GM12878 (cell line): ENCODE measurements at regions of chr5 and their contacts with region 1.

Region 1: GRCh38 chr5:127793879-127794278 is 90.7 kb downstream of the CCDC192 start:
- DNase-seq: no peak
- ATAC-seq: no peak
- H3K4me3 ChIP-seq: no peak overlapping the region
- H3K27ac ChIP-seq: no peak overlapping the region
- H3K4me1 ChIP-seq: no peaks in the 10 kb centered on the region
- H3K27me3 ChIP-seq: no peaks in the 10 kb centered on the region
- CTCF ChIP-seq: no peak
- EP300 ChIP-seq: no peak
- POLR2A ChIP-seq: no peak
- RAD21 ChIP-seq: no peak

Region 2: DNA sequence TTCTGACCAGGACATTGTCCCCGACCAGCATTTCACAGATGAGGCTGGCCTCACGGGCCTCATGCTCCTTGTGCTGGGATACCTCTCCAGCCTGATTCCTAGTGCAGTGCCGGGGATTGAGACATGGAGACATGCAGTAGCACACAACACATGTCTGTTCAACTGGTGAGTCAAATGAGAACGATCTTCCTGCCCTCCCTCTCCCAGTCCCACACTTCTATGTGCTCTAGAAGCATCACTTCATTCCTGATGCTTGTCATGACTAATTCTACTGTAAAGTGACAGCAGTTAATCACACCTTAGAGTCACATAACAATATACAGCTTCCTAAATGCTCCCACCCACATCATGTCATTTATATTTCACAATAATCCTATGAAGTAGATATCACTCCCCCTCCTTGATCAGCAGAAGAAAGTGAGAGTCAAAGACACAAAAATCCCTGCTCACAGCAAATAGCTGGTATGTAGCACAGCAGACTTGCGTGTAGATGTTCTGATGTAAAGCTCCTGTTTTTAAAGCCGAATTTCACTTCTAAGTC is 11.1 kb after region 1 on chr5:
- CTCF ChIA-PET with region 1: interaction called, 9 read pairs
- POLR2A ChIA-PET with region 1: no interaction called
- RAD21 ChIA-PET with region 1: interaction called, 4 read pairs
- SMC1A ChIA-PET with region 1: interaction called, 15 read pairs
- in situ Hi-C with region 1: no loop called
- intact Hi-C with region 1: no loop called
- DNase-seq: no peak
- ATAC-seq: no peak
- H3K4me3 ChIP-seq: no peak overlapping the region
- H3K27ac ChIP-seq: no peak overlapping the region
- H3K4me1 ChIP-seq: no peaks in the 10 kb centered on the region
- H3K27me3 ChIP-seq: no peaks in the 10 kb centered on the region; a peak in 1 of 4 replicates
- CTCF ChIP-seq: no peak
- EP300 ChIP-seq: no peak
- POLR2A ChIP-seq: no peak
- RAD21 ChIP-seq: no peak